ENCODE measurements at regions of chr13 and their contacts with region 1.

Region 1: GRCh38 chr13:112942689-112943308 is 26.2 kb upstream of the MCF2L start:
- DNase-seq: peak; percentile 86
- ATAC-seq: peak; percentile 97
- H3K4me3 Mint-ChIP-seq: peak overlapping the region; percentile 87
- H3K27ac Mint-ChIP-seq: no peak overlapping the region
- H3K4me1 Mint-ChIP-seq: peaks cover 6% of the 10 kb centered on the region
- H3K27me3 Mint-ChIP-seq: peaks cover 25% of the 10 kb centered on the region
- CTCF ChIP-seq: peak; percentile 78

Region 2: GRCh38 chr13:112443995-112444860 is 498.6 kb before region 1 on chr13:
- CTCF ChIA-PET with region 1: no interaction called
- POLR2A ChIA-PET with region 1: no interaction called
- intact Hi-C with region 1: no loop called
- DNase-seq: no peak
- ATAC-seq: no peak
- H3K4me3 Mint-ChIP-seq: no peak overlapping the region
- H3K27ac Mint-ChIP-seq: no peak overlapping the region
- H3K4me1 Mint-ChIP-seq: no peaks in the 10 kb centered on the region
- H3K27me3 Mint-ChIP-seq: peaks cover 13% of the 10 kb centered on the region
- CTCF ChIP-seq: no peak

Region 3: GRCh38 chr13:112893570-112894422 is 49.0 kb before region 1 on chr13:
- CTCF ChIA-PET with region 1: no interaction called
- POLR2A ChIA-PET with region 1: no interaction called
- intact Hi-C with region 1: loop called (anchors 2 kb)
- DNase-seq: no peak
- ATAC-seq: peak; percentile 80
- H3K4me3 Mint-ChIP-seq: peak overlapping the region; percentile 59
- H3K27ac Mint-ChIP-seq: no peak overlapping the region
- H3K4me1 Mint-ChIP-seq: peaks cover 22% of the 10 kb centered on the region
- H3K27me3 Mint-ChIP-seq: peaks cover 3% of the 10 kb centered on the region
- CTCF ChIP-seq: no peak

Region 4: DNA sequence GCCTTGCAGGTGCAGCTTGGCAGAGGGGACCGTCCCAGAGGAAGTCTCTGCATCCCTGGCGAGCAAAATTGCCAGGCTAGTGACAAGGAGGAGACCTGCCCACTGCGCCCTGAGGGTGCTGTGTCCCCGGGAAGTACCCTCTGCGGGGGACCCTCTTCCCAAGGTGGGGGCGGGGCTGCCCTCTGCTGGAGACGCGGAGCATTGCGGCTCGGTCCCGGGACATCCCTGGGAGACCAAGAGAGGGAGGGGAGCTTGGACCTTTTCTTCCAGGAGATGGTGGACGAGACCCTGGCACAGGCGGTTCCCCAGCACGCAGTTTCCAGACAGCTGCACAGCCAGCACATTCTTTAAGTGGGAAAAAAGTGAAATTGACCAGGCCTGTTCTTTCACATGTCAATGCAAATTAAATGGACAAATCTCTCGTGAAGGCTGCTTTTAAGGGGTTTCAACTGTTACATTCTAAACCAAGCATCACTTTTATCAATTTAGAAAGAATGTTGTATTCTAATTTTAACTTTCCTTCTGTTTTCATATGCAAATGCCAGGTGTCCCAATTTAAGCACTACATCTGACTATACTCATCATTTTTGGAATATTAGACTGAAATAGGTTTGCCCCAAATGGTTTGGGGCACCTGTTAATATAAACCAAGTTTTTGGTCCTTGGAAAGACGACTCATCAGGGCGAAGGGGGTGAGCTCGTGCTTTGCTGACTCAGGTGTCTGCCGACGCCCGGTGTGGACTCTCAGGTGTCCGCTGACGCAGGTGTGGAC is 86.9 kb after region 1 on chr13:
- CTCF ChIA-PET with region 1: interaction called, 18 read pairs
- POLR2A ChIA-PET with region 1: no interaction called
- intact Hi-C with region 1: loop called (anchors 1 kb)
- DNase-seq: peak; percentile 49
- ATAC-seq: no peak
- H3K4me3 Mint-ChIP-seq: no peak overlapping the region
- H3K27ac Mint-ChIP-seq: no peak overlapping the region
- H3K4me1 Mint-ChIP-seq: no peaks in the 10 kb centered on the region
- H3K27me3 Mint-ChIP-seq: no peaks in the 10 kb centered on the region
- CTCF ChIP-seq: no peak

Region 5: GRCh38 chr13:113044391-113045114 is 101.8 kb after region 1 on chr13:
- CTCF ChIA-PET with region 1: no interaction called
- POLR2A ChIA-PET with region 1: no interaction called
- intact Hi-C with region 1: no loop called
- DNase-seq: no peak
- ATAC-seq: no peak
- H3K4me3 Mint-ChIP-seq: no peak overlapping the region
- H3K27ac Mint-ChIP-seq: no peak overlapping the region
- H3K4me1 Mint-ChIP-seq: no peaks in the 10 kb centered on the region
- H3K27me3 Mint-ChIP-seq: no peaks in the 10 kb centered on the region
- CTCF ChIP-seq: no peak

Region 6: DNA sequence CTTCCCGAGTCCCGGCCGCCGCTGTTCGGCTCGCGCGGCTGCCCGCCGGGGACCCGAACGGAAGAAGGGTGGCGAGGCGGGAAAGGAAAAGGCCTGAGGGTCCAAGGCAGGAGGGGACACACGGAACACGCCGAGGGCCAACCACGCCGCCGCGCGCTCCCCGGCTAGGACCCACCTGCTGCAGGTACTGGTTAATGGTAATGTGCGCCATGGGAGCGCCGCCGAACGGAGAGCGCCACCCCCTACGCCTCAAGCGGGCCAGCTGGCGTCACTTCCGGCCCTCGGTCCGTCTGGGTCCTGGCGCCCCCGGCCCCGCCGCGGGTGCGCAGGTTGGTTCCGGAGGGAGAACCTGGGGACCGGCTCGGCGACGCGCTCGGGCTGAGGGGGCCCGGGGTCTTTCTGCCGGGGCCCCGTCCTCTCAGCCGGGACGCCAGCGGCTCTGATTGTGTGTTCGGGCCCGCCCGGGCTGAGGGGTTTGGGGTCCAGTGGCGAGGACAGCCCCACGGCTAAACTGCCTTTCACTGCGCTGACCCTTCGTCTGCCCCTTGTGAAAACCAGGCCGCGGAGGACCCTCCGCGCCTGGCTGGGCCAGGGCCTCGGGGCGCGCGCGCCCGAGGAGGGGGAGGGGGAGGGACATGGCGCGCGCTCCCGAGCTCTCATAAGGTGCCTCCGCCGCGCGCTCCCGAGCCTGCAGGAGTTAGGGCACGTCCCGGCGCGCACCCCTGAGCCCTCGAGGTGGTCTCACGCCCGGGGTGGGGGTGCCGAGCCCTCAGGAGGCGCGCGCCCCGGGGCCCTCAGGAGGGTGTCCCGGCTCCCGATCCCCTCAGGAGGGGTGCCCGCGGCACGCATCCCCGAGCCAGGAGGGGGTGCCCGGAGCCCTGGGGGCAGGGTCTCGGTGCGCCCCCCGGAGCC is 265.9 kb after region 1 on chr13 and contains the start of gene PCID2:
- CTCF ChIA-PET with region 1: interaction called, 7 read pairs
- POLR2A ChIA-PET with region 1: interaction called, 3 read pairs
- intact Hi-C with region 1: loop called (anchors 5 kb)
- DNase-seq: peak; percentile 99
- ATAC-seq: peak; percentile 73
- H3K4me3 Mint-ChIP-seq: peak within 1 kb of the TSS; percentile 89
- H3K27ac Mint-ChIP-seq: peak within 1 kb of the TSS; percentile 79
- H3K4me1 Mint-ChIP-seq: peaks cover 56% of the 10 kb centered on the region
- H3K27me3 Mint-ChIP-seq: no peaks in the 10 kb centered on the region
- CTCF ChIP-seq: no peak
- total RNA-seq, gene PCID2: 35.6 and 43.1 TPM in 2 replicates

Region 7: GRCh38 chr13:113393563-113394338 is 451.0 kb after region 1 on chr13:
- CTCF ChIA-PET with region 1: interaction called, 18 read pairs
- POLR2A ChIA-PET with region 1: no interaction called
- intact Hi-C with region 1: loop called (anchors 1 kb)
- DNase-seq: peak; percentile 88
- ATAC-seq: peak; percentile 98
- H3K4me3 Mint-ChIP-seq: peak overlapping the region; percentile 84
- H3K27ac Mint-ChIP-seq: peak overlapping the region; percentile 50
- H3K4me1 Mint-ChIP-seq: peaks cover 8% of the 10 kb centered on the region
- H3K27me3 Mint-ChIP-seq: no peaks in the 10 kb centered on the region
- CTCF ChIP-seq: no peak

Region 8: GRCh38 chr13:114234645-114235421 is 1292.0 kb after region 1 on chr13 and contains the start of gene CDC16:
- CTCF ChIA-PET with region 1: no interaction called
- POLR2A ChIA-PET with region 1: no interaction called
- intact Hi-C with region 1: loop called (anchors 5 kb)
- DNase-seq: peak; percentile 79
- ATAC-seq: peak; percentile 85
- H3K4me3 Mint-ChIP-seq: peak within 1 kb of the TSS; percentile 86
- H3K27ac Mint-ChIP-seq: peak within 1 kb of the TSS; percentile 88
- H3K4me1 Mint-ChIP-seq: peaks cover 22% of the 10 kb centered on the region
- H3K27me3 Mint-ChIP-seq: peaks cover 10% of the 10 kb centered on the region
- CTCF ChIP-seq: no peak
- total RNA-seq, gene CDC16: 84.2 and 98.0 TPM in 2 replicates